ENCODE measurements at regions of chr6 and their contacts with region 1.

Region 1: DNA sequence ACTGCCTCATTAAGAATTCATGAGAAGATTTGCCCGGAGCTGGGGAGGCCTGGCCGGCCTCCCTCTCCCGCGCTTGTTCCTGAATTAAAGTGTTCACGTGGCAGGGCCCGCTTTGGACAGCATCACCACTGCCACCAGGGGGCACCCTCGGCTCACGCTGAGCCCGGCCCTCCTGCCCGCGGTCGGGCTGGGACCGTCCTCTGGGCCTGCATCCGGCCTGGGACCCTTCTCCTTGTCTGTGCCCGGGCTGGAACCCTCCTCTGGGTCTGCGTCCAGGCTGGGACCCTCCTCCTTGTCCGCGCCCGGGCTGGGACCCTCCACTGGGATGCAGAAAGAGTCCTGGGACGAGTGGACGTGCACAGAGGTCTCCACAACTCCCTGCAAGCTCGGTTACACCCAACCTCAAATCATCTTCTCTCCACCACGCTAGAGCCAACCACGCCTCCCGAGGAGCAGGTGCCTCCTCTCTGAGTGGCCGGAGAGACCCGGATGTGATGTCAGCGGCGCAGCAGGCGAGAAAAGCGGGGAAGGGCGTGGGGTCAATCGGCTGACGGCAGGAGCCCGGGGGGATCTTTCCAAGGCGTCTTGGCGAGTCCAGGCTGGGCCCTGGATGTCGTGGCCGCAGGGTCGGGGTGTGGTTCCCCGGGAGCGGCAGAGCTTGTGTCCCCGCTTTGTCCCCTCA is 50.9 kb upstream of the DACT2 start:
- DNase-seq: peak; percentile 75 to 83 (median 76)
- ATAC-seq: peak; percentile 77 to 91 (median 86)
- H3K4me3 ChIP-seq: no peak overlapping the region
- H3K27ac ChIP-seq: no peak overlapping the region
- H3K4me1 ChIP-seq: peaks cover 0 to 9% (median 0%) of the 10 kb centered on the region in 12 donors
- H3K27me3 ChIP-seq: peaks cover 0 to 26% (median 0%) of the 10 kb centered on the region in 9 donors
- CTCF ChIP-seq: peak; percentile 64 to 85 (median 79)
- POLR2A ChIP-seq: no peak

Region 2: DNA sequence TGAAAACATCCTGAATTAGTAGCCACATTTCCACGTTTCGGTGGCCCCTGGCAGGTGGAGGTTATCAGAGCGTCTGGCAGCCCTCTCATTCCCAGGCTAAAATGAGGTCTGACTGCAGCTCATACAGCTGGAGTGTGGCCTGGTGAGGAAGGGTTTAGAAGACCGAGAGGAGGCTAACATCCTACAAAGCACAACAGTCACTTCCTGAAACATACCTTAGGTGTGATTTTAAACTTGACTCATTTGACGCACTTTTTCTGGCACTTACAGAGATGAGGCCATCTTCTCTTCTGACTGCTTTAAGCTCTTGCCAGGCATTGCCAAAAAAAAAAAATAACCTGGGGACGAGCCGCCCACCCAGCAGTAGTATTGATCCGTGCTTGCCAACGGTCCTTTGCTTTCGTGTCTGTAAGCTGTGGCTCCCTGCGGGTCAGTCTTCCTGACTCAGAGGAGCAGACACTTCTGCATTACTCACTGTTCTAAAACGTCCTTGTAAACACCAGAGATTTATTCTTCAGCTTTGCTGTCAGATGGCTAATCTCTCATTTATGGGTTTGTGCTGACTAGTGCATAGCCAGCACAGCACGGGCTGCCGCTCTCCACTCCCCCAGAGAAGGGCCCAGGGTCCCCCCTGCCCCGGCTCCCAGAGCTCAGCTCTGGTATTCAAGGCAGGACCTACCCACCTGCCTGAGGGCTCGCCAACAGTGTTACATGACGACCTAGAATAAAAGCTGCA is 213.0 kb before region 1 on chr6:
- intact Hi-C with region 1: loop called in 1 of 10 experiments (anchors 10 kb)
- DNase-seq: peak in 1 of 5 donors; percentile 12
- ATAC-seq: peak in 1 of 4 donors; percentile 71
- H3K4me3 ChIP-seq: peak overlapping the region in 1 of 12 donors; percentile 32
- H3K27ac ChIP-seq: peak overlapping the region in 2 of 12 donors; percentile 29 to 69
- H3K4me1 ChIP-seq: peaks cover 0 to 7% (median 0%) of the 10 kb centered on the region in 12 donors
- H3K27me3 ChIP-seq: peaks cover 0 to 38% (median 4%) of the 10 kb centered on the region in 9 donors
- CTCF ChIP-seq: no peak
- POLR2A ChIP-seq: no peak

Region 3: DNA sequence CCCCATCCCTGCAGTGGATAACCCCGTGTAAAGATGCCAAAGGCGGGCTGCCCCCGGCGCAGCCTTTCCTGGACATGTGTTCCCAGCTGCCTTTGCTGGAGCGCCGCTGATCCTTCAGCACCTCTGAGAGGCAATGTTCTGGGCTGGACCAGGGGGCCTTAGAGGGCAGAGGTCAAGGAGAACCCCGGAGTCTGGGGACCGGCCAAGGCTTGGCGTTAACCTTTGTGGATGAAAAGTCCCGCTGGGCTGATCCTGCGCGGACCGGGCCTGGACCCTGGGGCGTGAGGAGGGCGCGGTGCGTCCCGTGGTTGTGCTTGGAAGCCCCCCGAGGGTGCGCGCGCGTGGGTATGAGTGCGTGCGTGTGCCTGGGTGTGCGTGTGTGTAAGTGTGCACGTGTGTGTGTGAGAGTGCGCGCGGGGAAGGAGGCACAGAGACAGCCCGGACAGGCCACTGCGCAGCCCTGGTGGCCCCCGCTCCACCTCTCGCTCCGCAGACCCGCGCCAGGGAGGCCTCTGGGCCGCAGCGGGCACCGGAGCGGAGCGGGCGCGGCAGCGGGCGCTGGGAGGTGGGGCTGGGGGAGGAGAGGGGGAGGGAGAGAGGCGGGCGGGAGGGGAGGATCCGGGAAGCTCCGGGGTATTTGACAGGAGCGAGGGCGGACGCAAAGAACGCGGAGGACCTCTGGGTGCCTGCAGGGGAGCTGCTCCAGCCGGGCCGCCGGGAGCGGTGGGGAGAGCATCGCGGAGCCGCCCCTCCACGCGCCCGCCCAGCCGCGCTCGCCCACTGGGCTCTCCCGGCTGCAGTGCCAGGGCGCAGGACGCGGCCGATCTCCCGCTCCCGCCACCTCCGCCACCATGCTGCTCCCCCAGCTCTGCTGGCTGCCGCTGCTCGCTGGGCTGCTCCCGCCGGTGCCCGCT is 70.3 kb after region 1 on chr6 and contains the start of gene SMOC2:
- intact Hi-C with region 1: loop called in 2 of 10 experiments (anchors 5 kb)
- DNase-seq: peak in 4 of 5 donors; percentile 54 to 68 (median 60)
- ATAC-seq: peak; percentile 33 to 80 (median 71)
- H3K4me3 ChIP-seq: peak within 1 kb of the TSS; percentile 41 to 79 (median 60)
- H3K27ac ChIP-seq: peak within 1 kb of the TSS in 10 of 12 donors; percentile 22 to 84 (median 63)
- H3K4me1 ChIP-seq: peaks cover 0 to 22% (median 7%) of the 10 kb centered on the region in 12 donors
- H3K27me3 ChIP-seq: peaks cover 9 to 56% (median 29%) of the 10 kb centered on the region in 9 donors
- CTCF ChIP-seq: peak in 1 of 12 donors; percentile 6
- POLR2A ChIP-seq: no peak
- total RNA-seq, gene SMOC2: 7.6 to 44.2 (median 24.0) TPM

Region 4: GRCh38 chr6:168526841-168527281 is 156.4 kb after region 1 on chr6:
- intact Hi-C with region 1: loop called in 1 of 10 experiments (anchors 10 kb)
- DNase-seq: peak in 3 of 5 donors; percentile 37 to 71 (median 58)
- ATAC-seq: peak; percentile 92 to 95 (median 93)
- H3K4me3 ChIP-seq: no peak overlapping the region
- H3K27ac ChIP-seq: peak overlapping the region; percentile 16 to 72 (median 60)
- H3K4me1 ChIP-seq: peaks cover 0 to 35% (median 16%) of the 10 kb centered on the region in 12 donors
- H3K27me3 ChIP-seq: peaks cover 0 to 5% (median 0%) of the 10 kb centered on the region in 9 donors
- CTCF ChIP-seq: no peak
- POLR2A ChIP-seq: no peak

Region 5: GRCh38 chr6:168916576-168917207 is 546.2 kb after region 1 on chr6:
- intact Hi-C with region 1: no loop called
- DNase-seq: no peak
- ATAC-seq: peak in 1 of 4 donors; percentile 61
- H3K4me3 ChIP-seq: no peak overlapping the region
- H3K27ac ChIP-seq: peak overlapping the region in 1 of 12 donors; percentile 21
- H3K4me1 ChIP-seq: peaks cover 0 to 10% (median 0%) of the 10 kb centered on the region in 12 donors
- H3K27me3 ChIP-seq: no peaks in the 10 kb centered on the region
- CTCF ChIP-seq: no peak
- POLR2A ChIP-seq: no peak